ENCODE measurements at regions of chr2 and their contacts with region 1.

Region 1: DNA sequence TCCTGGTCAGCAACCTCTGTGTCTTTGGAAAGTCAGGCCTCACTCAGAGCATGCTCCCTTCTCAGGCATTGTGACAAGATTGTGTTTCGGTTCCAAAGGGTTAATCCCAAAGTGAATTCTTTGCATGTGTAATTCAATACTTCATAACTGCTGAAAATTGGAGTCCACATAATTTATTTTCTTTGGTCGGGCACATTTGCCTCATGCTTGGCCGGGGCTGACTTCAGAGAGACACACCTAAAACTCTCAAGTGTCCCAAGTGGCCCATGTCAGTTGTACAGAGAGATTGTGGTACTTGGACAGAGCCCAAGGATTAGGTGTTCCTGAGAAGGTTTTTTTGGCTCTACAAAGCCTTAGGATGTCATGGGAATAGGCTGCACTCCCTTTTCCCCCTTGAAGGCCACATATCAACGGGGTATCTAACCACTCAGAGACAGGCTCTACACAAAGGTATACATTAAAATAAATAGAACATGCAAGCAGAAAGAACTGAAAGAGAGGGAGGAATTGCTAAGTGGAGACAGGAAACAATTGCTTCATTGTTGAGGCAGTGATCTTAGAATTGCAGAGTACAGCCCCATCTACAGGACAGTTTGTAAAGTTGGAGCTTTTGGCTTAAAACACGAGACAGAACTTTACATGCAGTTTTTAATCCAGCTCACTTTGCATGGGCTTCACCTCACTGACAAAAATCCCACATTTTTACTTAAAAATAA is 1232.3 kb upstream of the ZEB2 start:
- DNase-seq: peak; percentile 85
- H3K4me3 ChIP-seq: no peak overlapping the region
- H3K27ac ChIP-seq: peak overlapping the region; percentile 41
- H3K4me1 ChIP-seq: peaks cover 25% of the 10 kb centered on the region
- H3K27me3 ChIP-seq: no peaks in the 10 kb centered on the region
- CTCF ChIP-seq: peak; percentile 64 to 66
- POLR2A ChIP-seq: no peak

Region 2: DNA sequence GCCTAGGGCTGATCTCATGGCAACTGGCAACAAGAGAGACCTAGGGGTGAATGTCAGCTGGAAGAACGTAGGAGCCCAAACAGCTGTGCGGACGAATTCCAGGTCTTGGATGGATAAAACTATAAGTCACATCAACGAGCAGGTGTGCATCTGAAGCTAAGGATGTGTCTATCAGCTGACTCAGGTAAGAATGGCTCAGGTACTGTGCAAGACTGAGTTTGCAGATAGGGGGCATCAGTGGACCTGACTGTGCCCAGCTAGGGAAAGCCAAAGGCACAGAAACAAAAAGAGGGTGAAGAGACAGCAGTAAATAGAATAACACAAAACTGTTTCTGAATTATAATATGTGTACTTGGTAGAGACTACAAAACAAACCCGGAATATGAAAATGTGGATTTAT is 1589.6 kb before region 1 on chr2:
- CTCF ChIA-PET with region 1: no interaction called
- POLR2A ChIA-PET with region 1: no interaction called
- dilution Hi-C with region 1: no loop called
- intact Hi-C with region 1: loop called (anchors 2 kb)
- DNase-seq: no peak
- H3K4me3 ChIP-seq: no peak overlapping the region
- H3K27ac ChIP-seq: no peak overlapping the region
- H3K4me1 ChIP-seq: no peaks in the 10 kb centered on the region
- H3K27me3 ChIP-seq: no peaks in the 10 kb centered on the region
- CTCF ChIP-seq: peak in 1 of 2 donors; percentile 19
- POLR2A ChIP-seq: no peak

Region 3: DNA sequence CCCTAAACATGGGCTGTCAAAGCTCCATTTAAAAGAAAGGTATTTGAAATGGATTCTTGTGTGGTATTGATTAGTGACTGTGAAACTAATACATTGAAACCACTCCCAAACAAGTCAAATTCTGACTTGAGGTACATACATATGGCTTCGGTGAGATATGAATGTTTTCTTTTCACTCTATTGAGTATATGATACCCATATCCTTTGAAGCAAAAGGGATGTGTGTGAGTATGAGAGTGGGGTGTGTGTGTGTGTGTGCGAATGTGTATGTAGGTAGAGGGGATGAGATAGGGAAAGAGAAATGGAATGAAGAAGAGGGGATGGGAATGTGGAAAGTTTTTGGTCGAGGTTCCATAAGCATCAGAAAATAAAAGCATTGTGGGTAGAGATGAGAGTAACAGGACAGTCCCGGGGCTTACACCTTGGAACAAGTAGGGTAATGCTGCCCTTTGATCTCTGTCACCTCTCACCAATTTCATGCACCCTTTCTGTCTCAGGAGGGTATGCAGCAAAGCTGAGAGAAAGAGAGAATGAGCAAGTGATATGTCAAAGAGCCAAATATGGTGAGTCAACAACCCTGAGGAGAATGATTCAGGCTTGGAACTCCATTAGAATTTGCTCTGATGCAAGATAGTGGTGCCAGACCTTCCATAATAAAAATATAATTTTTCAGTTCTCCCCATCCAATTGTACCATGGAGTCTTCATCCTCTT is 1168.4 kb before region 1 on chr2:
- CTCF ChIA-PET with region 1: interaction called, 5 read pairs
- POLR2A ChIA-PET with region 1: no interaction called
- dilution Hi-C with region 1: no loop called
- intact Hi-C with region 1: loop called (anchors 5 kb)
- DNase-seq: peak; percentile 43
- H3K4me3 ChIP-seq: no peak overlapping the region
- H3K27ac ChIP-seq: no peak overlapping the region
- H3K4me1 ChIP-seq: peaks cover 37% of the 10 kb centered on the region
- H3K27me3 ChIP-seq: no peaks in the 10 kb centered on the region
- CTCF ChIP-seq: no peak
- POLR2A ChIP-seq: no peak

Region 4: GRCh38 chr2:145007093-145007959 is 744.9 kb before region 1 on chr2:
- CTCF ChIA-PET with region 1: interaction called, 4 read pairs
- POLR2A ChIA-PET with region 1: no interaction called
- dilution Hi-C with region 1: no loop called
- intact Hi-C with region 1: loop called (anchors 2 kb)
- DNase-seq: peak; percentile 91
- H3K4me3 ChIP-seq: peak overlapping the region in 1 of 3 experiments; percentile 3
- H3K27ac ChIP-seq: peak overlapping the region; percentile 80
- H3K4me1 ChIP-seq: peaks cover 38% of the 10 kb centered on the region
- H3K27me3 ChIP-seq: no peaks in the 10 kb centered on the region
- CTCF ChIP-seq: no peak
- POLR2A ChIP-seq: no peak

Region 5: DNA sequence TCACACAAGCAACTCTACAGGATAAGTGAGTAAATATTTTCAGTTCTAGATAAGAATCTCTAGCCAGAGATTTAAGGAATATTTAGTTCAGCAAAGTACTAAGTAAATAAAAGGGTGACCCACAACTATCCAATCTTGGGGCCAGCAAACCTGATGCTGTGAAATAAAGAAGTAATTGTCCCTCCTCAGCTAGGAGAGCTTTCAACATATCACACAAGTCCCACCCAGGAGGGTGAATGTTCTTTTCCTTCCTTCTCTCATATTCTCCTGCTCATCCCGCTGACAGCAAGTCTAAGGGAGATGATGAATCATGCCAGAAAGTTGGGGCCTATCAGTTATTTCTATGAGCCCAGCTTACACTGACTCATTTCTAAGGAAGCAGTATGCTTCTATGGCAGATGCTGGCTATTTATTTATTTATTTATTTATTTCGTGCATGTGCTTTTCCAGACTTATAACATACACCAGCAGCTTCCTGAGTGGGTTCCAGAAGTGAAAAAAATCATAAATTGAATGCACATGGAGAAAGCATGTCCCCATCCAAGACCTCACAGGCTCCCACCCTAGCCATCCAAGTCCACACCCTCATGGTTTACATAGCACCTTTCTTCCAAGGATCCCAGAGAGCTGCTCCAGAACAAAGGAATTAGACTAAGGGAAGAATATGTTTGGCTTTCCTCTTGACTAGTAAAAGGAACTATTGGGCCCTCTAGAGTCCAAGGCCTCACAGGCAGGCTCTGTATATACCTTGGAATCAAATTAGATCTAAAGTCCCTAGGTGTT is 158.2 kb before region 1 on chr2:
- CTCF ChIA-PET with region 1: interaction called, 3 read pairs
- POLR2A ChIA-PET with region 1: no interaction called
- dilution Hi-C with region 1: no loop called
- intact Hi-C with region 1: loop called (anchors 2 kb)
- DNase-seq: peak; percentile 87
- H3K4me3 ChIP-seq: no peak overlapping the region
- H3K27ac ChIP-seq: peak overlapping the region; percentile 82
- H3K4me1 ChIP-seq: peaks cover 51% of the 10 kb centered on the region
- H3K27me3 ChIP-seq: no peaks in the 10 kb centered on the region
- CTCF ChIP-seq: peak in 1 of 2 donors; percentile 25
- POLR2A ChIP-seq: no peak

Region 6: DNA sequence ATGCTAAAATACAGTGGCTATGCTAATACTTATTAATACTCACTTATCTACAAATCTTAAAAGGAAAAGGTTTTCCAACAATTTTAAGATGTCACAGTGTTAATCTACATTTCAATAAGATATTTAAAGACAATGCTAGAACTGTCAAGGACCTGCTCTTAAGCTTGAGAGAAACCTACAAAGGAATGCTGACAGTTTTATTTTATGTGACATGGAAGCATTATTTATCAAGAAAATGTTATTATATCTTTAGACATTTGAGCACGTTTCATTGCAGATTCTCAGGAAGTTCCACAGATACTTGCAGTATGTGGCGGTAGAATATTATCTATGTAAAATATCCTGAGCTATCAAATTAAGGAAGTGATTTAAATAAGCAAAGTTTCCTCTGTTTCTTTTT is 23.3 kb after region 1 on chr2:
- CTCF ChIA-PET with region 1: no interaction called
- POLR2A ChIA-PET with region 1: no interaction called
- dilution Hi-C with region 1: no loop called
- intact Hi-C with region 1: no loop called
- DNase-seq: peak; percentile 48
- H3K4me3 ChIP-seq: no peak overlapping the region
- H3K27ac ChIP-seq: no peak overlapping the region
- H3K4me1 ChIP-seq: peaks cover 7% of the 10 kb centered on the region
- H3K27me3 ChIP-seq: no peaks in the 10 kb centered on the region
- CTCF ChIP-seq: no peak
- POLR2A ChIP-seq: no peak

Region 7: DNA sequence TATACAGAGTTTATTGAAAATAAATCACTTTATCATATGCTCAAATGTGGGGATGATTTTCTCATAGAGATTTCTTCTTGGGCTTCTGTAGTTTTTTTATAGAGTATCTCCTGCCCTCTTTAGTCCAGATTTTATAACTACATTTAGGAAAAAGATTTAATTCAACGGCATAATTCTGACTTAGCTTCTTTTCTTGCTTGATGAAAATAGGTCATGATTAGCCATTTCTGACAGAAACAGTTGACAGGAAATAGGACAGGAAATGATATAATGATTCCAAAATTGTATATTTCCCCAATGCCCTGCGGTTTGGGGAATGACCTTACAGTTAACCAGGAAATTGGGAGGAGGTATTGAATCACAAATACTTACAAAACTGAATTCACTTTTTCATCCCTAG is 560.6 kb after region 1 on chr2:
- CTCF ChIA-PET with region 1: interaction called, 13 read pairs
- POLR2A ChIA-PET with region 1: no interaction called
- dilution Hi-C with region 1: no loop called
- intact Hi-C with region 1: loop called (anchors 5 kb)
- DNase-seq: peak; percentile 65
- H3K4me3 ChIP-seq: no peak overlapping the region
- H3K27ac ChIP-seq: peak overlapping the region; percentile 40
- H3K4me1 ChIP-seq: peaks cover 14% of the 10 kb centered on the region
- H3K27me3 ChIP-seq: no peaks in the 10 kb centered on the region
- CTCF ChIP-seq: no peak
- POLR2A ChIP-seq: no peak